ENCODE measurements at regions of chr2 and their contacts with region 1.

Region 1: DNA sequence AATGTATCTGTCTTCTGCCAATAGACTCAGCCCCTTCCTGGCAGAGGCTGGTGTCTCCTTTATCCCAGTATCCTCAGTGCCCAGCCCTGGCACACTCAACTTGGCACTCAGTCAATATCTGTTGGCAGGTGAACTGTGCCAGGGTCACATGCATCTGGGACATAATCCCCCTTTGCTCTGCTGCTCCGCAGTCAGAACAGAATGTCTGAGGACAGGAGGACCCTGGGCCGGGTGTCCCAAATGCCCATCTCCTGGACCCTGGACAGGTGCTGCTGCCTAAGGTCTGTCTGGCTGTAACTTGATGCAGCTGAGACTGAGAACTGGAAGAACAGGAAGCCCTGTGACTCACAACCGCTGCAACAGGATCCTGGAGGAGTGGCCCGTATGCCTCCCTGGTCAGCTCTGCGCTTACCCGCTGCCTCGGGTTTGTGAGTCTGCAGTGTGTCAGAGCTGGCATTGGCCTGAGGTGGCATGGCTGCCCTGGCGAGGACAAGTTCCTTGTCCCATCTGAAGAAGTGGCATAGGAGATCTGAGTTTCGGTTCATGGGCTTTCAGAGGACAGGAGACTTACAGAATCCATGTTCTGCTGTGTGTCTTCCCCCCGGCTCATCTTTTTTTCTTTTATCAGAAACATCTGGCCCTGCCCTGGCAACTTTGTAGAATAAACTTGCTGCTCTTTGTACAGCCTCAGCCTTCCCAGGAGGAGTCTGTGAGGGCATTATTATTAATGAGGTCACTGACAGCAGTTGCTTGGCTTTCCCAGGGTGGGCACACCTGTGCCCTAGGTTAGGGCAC is 11.5 kb downstream of the HK2 start:
- DNase-seq: peak; percentile 93
- H3K4me3 Mint-ChIP-seq: peak overlapping the region; percentile 37
- H3K27ac Mint-ChIP-seq: peak overlapping the region; percentile 79
- H3K4me1 Mint-ChIP-seq: peaks cover 92% of the 10 kb centered on the region
- H3K27me3 Mint-ChIP-seq: no peaks in the 10 kb centered on the region
- CTCF ChIP-seq: no peak

Region 2: GRCh38 chr2:74740389-74741075 is 104.9 kb before region 1 on chr2:
- CTCF ChIA-PET with region 1: no interaction called
- intact Hi-C with region 1: no loop called
- DNase-seq: peak; percentile 86
- H3K4me3 Mint-ChIP-seq: peak overlapping the region; percentile 38
- H3K27ac Mint-ChIP-seq: peak overlapping the region; percentile 67
- H3K4me1 Mint-ChIP-seq: peaks cover 42% of the 10 kb centered on the region
- H3K27me3 Mint-ChIP-seq: no peaks in the 10 kb centered on the region
- CTCF ChIP-seq: no peak

Region 3: GRCh38 chr2:74864846-74865722 is 19.7 kb after region 1 on chr2:
- CTCF ChIA-PET with region 1: interaction called, 5 read pairs
- intact Hi-C with region 1: loop called (anchors 2 kb)
- DNase-seq: peak; percentile 48
- H3K4me3 Mint-ChIP-seq: peak overlapping the region; percentile 5
- H3K27ac Mint-ChIP-seq: peak overlapping the region; percentile 56
- H3K4me1 Mint-ChIP-seq: peaks cover 62% of the 10 kb centered on the region
- H3K27me3 Mint-ChIP-seq: no peaks in the 10 kb centered on the region
- CTCF ChIP-seq: no peak

Measured in Calu3 (cell line).